ENCODE measurements at regions of chr7 and their contacts with region 1.

Region 1: DNA sequence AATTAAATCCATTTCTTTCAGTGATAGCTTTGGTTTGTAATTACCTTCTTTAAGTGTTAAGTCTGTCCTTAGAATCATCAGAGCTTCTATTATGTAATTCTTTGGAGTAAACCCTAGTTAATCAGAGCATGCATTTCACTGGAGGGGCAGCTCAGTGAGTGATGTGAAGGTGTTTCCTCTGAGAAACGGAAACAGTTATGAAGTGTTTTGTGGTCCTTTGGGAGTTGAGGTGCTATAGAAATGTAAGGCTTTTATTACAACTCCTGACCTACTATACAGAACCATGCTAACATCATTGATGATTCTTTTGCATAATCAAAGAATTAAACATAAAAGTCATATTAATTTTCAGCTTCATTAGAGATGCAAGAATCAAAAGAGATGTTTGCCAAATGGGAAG is 141.5 kb downstream of the EXOC4 start:
- DNase-seq: no peak
- H3K4me3 ChIP-seq: no peak overlapping the region
- H3K27ac ChIP-seq: no peak overlapping the region
- H3K4me1 ChIP-seq: no peaks in the 10 kb centered on the region
- H3K27me3 ChIP-seq: no peaks in the 10 kb centered on the region
- CTCF ChIP-seq: no peak

Region 2: GRCh38 chr7:133412942-133413341 is 18.6 kb after region 1 on chr7:
- CTCF ChIA-PET with region 1: no interaction called
- POLR2A ChIA-PET with region 1: interaction called, 11 read pairs
- intact Hi-C with region 1: no loop called
- DNase-seq: no peak
- H3K4me3 ChIP-seq: no peak overlapping the region
- H3K27ac ChIP-seq: no peak overlapping the region
- H3K4me1 ChIP-seq: no peaks in the 10 kb centered on the region
- H3K27me3 ChIP-seq: no peaks in the 10 kb centered on the region
- CTCF ChIP-seq: no peak

Region 3: GRCh38 chr7:133429371-133429770 is 35.0 kb after region 1 on chr7:
- CTCF ChIA-PET with region 1: no interaction called
- POLR2A ChIA-PET with region 1: no interaction called
- intact Hi-C with region 1: no loop called
- DNase-seq: no peak
- H3K4me3 ChIP-seq: no peak overlapping the region
- H3K27ac ChIP-seq: no peak overlapping the region
- H3K4me1 ChIP-seq: no peaks in the 10 kb centered on the region
- H3K27me3 ChIP-seq: no peaks in the 10 kb centered on the region
- CTCF ChIP-seq: no peak

Region 4: DNA sequence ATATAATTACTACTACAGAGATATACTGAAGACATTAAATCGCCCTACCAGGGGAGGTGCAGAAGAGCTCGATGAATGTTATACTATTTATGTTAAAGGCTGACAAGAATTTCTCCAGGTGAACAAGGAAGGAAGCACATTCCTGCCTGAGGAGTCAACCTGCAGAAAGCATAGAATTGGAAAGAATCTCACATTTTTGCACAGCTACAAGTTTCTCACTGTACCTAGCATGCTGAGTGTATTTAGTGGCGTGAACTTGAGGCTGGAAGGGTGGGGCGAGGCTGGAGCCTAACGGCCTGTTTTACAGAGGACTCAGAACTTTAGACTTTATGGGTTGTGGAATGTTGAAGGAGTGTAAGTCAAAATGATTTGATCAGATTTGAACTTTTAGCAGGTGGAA is 359.1 kb after region 1 on chr7:
- CTCF ChIA-PET with region 1: no interaction called
- POLR2A ChIA-PET with region 1: interaction called, 13 read pairs
- intact Hi-C with region 1: no loop called
- DNase-seq: peak; percentile 37 to 66
- H3K4me3 ChIP-seq: no peak overlapping the region
- H3K27ac ChIP-seq: no peak overlapping the region
- H3K4me1 ChIP-seq: peaks cover 7% of the 10 kb centered on the region; the same call in 1 of the 2 replicates
- H3K27me3 ChIP-seq: no peaks in the 10 kb centered on the region
- CTCF ChIP-seq: no peak